IMR-90 (cell line): ENCODE measurements at regions of chr3 and their contacts with region 1.

Region 1: GRCh38 chr3:115922681-115923347 is 299.5 kb downstream of the GAP43 start:
- DNase-seq: peak; percentile 62
- ATAC-seq: peak; percentile 98
- H3K4me3 ChIP-seq: no peak overlapping the region
- H3K27ac ChIP-seq: no peak overlapping the region
- H3K4me1 ChIP-seq: no peaks in the 10 kb centered on the region
- H3K27me3 ChIP-seq: no peaks in the 10 kb centered on the region
- CTCF ChIP-seq: peak; percentile 58
- POLR2A ChIP-seq: no peak
- RAD21 ChIP-seq: peak; percentile 42; the same call in 1 of the 2 replicates

Region 2: DNA sequence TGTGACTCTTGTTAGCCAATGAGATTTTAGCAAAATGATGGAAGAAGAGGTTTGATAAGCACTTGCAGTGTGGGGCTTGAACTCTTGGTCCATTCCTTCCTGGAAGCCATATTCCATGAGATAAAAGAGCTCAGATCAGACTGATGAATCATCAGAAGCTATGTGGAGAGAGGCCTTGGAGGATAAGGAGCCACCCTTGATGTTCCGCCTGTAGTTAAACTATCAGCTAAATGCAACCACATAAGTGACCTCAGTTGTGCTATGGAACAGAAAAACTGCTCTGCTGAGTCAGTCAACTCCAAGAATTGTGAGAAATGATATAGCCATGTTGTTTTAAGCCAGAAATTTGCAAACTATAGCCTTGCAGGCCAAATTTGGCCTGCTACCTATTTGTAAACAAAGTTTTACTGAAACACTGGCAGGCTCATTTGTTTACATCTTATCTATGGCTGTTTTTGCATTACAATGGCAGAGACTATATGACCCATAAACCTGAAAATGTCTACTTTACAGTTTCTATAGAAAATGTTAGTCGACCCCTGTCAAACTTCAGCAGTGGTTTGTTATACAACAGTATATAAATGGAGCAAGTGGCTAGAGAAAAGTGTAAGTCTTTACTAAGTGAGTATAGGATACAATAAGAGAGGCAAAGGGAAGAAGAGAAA is 327.1 kb before region 1 on chr3:
- CTCF ChIA-PET with region 1: no interaction called
- POLR2A ChIA-PET with region 1: no interaction called
- dilution Hi-C with region 1: no loop called
- in situ Hi-C with region 1: no loop called
- intact Hi-C with region 1: no loop called
- DNase-seq: peak; percentile 10
- ATAC-seq: no peak
- H3K4me3 ChIP-seq: no peak overlapping the region
- H3K27ac ChIP-seq: no peak overlapping the region
- H3K4me1 ChIP-seq: no peaks in the 10 kb centered on the region
- H3K27me3 ChIP-seq: no peaks in the 10 kb centered on the region; the same call in 1 of the 2 replicates
- CTCF ChIP-seq: no peak
- POLR2A ChIP-seq: no peak
- RAD21 ChIP-seq: no peak

Region 3: DNA sequence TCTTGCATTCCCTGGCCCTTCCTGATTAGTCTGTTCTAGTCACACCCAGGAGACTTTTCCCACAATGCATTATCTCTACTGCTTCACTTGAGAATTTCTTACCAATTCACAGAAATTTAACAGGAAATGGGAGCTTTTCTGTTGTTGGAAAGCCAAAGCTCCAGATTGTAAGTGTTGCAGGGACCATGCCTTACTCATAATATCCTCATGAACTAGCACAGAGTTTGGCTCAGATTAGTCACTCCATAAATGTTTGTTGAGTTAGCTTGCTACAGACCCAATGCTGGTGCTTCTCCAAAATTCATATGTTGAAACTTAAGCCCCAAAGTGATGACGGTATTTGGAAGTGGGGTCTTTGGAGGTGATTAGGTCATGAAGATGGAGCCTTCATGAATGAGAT is 66.9 kb before region 1 on chr3:
- CTCF ChIA-PET with region 1: interaction called, 5 read pairs
- POLR2A ChIA-PET with region 1: interaction called, 3 read pairs
- dilution Hi-C with region 1: no loop called
- in situ Hi-C with region 1: no loop called
- intact Hi-C with region 1: loop called (anchors 5 kb)
- DNase-seq: peak; percentile 87
- ATAC-seq: peak; percentile 77
- H3K4me3 ChIP-seq: no peak overlapping the region
- H3K27ac ChIP-seq: peak overlapping the region; percentile 46; the same call in 1 of the 2 replicates
- H3K4me1 ChIP-seq: peaks cover 11% of the 10 kb centered on the region
- H3K27me3 ChIP-seq: no peaks in the 10 kb centered on the region
- CTCF ChIP-seq: no peak
- POLR2A ChIP-seq: no peak
- RAD21 ChIP-seq: no peak